ENCODE measurements at regions of chr11 and their contacts with region 1.

Region 1: GRCh38 chr11:15622231-15622890 is 507.6 kb downstream of the INSC start:
- DNase-seq: no peak
- H3K4me3 ChIP-seq: no peak overlapping the region
- H3K27ac ChIP-seq: peak overlapping the region in 1 of 2 experiments; percentile 100; a peak in 2 of 4 replicates
- H3K4me1 ChIP-seq: peaks cover 0 to 46% of the 10 kb centered on the region in 2 experiments; a peak in 2 of 4 replicates
- H3K27me3 ChIP-seq: no peaks in the 10 kb centered on the region
- CTCF ChIP-seq: no peak
- EP300 ChIP-seq: no peak
- RAD21 ChIP-seq: no peak

Region 2: GRCh38 chr11:15585602-15586331 is 36.6 kb before region 1 on chr11:
- CTCF ChIA-PET with region 1: interaction called, 24 read pairs
- POLR2A ChIA-PET with region 1: interaction called, 4 read pairs
- DNase-seq: peak; percentile 58
- H3K4me3 ChIP-seq: no peak overlapping the region
- H3K27ac ChIP-seq: peak overlapping the region in 1 of 2 experiments; percentile 99; a peak in 2 of 4 replicates
- H3K4me1 ChIP-seq: peaks cover 0 to 46% of the 10 kb centered on the region in 2 experiments; a peak in 2 of 4 replicates
- H3K27me3 ChIP-seq: no peaks in the 10 kb centered on the region
- CTCF ChIP-seq: no peak
- EP300 ChIP-seq: peak in 1 of 2 experiments; percentile 95; a peak in 2 of 4 replicates
- RAD21 ChIP-seq: peak; percentile 18; the same call in 1 of the 2 replicates

Measured in SK-N-SH (cell line).